ENCODE measurements at regions of chr7 and their contacts with region 1.

Region 1: GRCh38 chr7:21427182-21427870 is 557 bp upstream of the SP4 start:
- DNase-seq: peak; percentile 99
- H3K4me3 Mint-ChIP-seq: peak overlapping the region; percentile 98
- H3K27ac Mint-ChIP-seq: peak overlapping the region; percentile 99
- H3K4me1 Mint-ChIP-seq: peaks cover 34% of the 10 kb centered on the region
- H3K27me3 Mint-ChIP-seq: no peaks in the 10 kb centered on the region

Region 2: GRCh38 chr7:20798081-20798693 is 629.1 kb before region 1 on chr7:
- CTCF ChIA-PET with region 1: no interaction called
- intact Hi-C with region 1: loop called (anchors 2 kb)
- DNase-seq: peak; percentile 13
- H3K4me3 Mint-ChIP-seq: peak overlapping the region; percentile 38
- H3K27ac Mint-ChIP-seq: no peak overlapping the region
- H3K4me1 Mint-ChIP-seq: peaks cover 15% of the 10 kb centered on the region
- H3K27me3 Mint-ChIP-seq: peaks cover 61% of the 10 kb centered on the region

Region 3: DNA sequence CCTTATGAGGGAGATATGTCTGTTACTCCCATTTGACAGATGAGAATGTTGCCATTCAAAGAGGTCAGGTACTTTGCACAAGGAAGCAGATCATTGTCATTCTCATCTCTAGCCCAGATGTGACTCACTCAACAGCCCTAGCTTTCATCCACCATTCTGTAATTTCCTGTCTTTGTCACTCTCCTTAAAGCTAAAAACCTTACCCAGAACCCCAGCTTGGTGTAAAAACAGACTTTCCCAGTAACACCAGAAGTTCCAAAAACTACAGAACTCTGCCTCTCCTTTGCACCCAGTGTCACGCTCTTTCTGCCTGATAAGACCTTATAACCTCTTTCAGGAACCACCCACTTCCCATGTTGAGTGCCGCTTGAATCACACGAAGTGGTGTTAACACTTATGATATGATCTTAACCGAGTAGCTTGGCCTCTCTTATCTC is 88.6 kb before region 1 on chr7:
- CTCF ChIA-PET with region 1: no interaction called
- intact Hi-C with region 1: loop called (anchors 1 kb)
- DNase-seq: peak; percentile 80
- H3K4me3 Mint-ChIP-seq: peak overlapping the region; percentile 1
- H3K27ac Mint-ChIP-seq: peak overlapping the region; percentile 94
- H3K4me1 Mint-ChIP-seq: peaks cover 20% of the 10 kb centered on the region
- H3K27me3 Mint-ChIP-seq: no peaks in the 10 kb centered on the region

Region 4: GRCh38 chr7:21450946-21451345 is 23.6 kb after region 1 on chr7:
- CTCF ChIA-PET with region 1: no interaction called
- intact Hi-C with region 1: no loop called
- DNase-seq: no peak
- H3K4me3 Mint-ChIP-seq: no peak overlapping the region
- H3K27ac Mint-ChIP-seq: no peak overlapping the region
- H3K4me1 Mint-ChIP-seq: peaks cover 27% of the 10 kb centered on the region
- H3K27me3 Mint-ChIP-seq: no peaks in the 10 kb centered on the region

Region 5: DNA sequence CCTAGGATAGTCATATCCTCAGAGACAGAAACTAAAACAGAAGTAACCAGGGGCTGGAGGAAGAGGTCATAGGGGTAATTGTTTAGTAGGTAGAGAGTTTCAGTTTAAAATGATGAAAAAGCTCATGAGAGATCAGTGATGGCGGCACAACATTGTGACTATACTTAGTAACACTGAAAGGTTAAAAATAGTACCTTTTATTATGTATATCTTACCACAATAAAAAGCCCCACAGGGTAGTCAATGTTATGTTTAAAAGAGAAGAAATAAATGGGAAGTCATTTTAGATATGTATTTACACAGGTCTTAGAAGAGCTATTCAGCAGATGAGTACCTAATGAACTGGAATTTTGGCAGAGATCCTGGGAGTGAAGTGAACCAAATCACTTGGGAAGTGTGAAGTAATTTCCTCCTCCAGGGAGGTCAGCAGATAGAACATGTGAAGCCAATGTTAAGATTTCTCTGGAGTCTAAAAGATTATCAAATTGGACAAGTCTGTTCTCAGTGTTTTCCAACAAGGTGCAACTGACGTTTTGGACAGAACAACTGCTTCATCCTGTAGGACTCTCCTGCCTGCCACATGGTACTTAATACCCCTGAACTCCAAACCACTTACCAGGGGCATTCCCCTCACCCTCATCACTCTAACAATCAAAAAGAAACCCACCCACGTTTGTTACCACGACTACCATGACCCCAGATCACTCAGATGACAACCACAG is 512.0 kb after region 1 on chr7:
- CTCF ChIA-PET with region 1: no interaction called
- intact Hi-C with region 1: loop called (anchors 1 kb)
- DNase-seq: peak; percentile 84
- H3K4me3 Mint-ChIP-seq: peak overlapping the region; percentile 13
- H3K27ac Mint-ChIP-seq: peak overlapping the region; percentile 77
- H3K4me1 Mint-ChIP-seq: peaks cover 72% of the 10 kb centered on the region
- H3K27me3 Mint-ChIP-seq: no peaks in the 10 kb centered on the region

Region 6: GRCh38 chr7:22822486-22823141 is 1395.3 kb after region 1 on chr7 and contains the start of gene TOMM7:
- CTCF ChIA-PET with region 1: no interaction called
- intact Hi-C with region 1: loop called (anchors 5 kb)
- DNase-seq: peak; percentile 92
- H3K4me3 Mint-ChIP-seq: peak within 1 kb of the TSS; percentile 99
- H3K27ac Mint-ChIP-seq: peak within 1 kb of the TSS; percentile 96
- H3K4me1 Mint-ChIP-seq: peaks cover 36% of the 10 kb centered on the region
- H3K27me3 Mint-ChIP-seq: peaks cover 10% of the 10 kb centered on the region
- total RNA-seq, gene TOMM7: 269 to 297 TPM

Region 7: GRCh38 chr7:23181684-23182553 is 1754.6 kb after region 1 on chr7 and contains the start of gene NUP42:
- CTCF ChIA-PET with region 1: no interaction called
- intact Hi-C with region 1: loop called (anchors 5 kb)
- DNase-seq: peak; percentile 98
- H3K4me3 Mint-ChIP-seq: peak within 1 kb of the TSS; percentile 99
- H3K27ac Mint-ChIP-seq: peak within 1 kb of the TSS; percentile 99
- H3K4me1 Mint-ChIP-seq: peaks cover 35% of the 10 kb centered on the region
- H3K27me3 Mint-ChIP-seq: no peaks in the 10 kb centered on the region
- total RNA-seq, gene NUP42: 15.2 to 17.0 TPM

Measured in activated naive CD4-positive, alpha-beta T cell treated with anti-CD3 and anti-CD28 coated beads for 36 hours (primary cell).